Heart left ventricle (tissue), 16 donors: ENCODE measurements at regions of chr7 and their contacts with region 1.

Region 1: GRCh38 chr7:92833024-92833765 is 3.2 kb downstream of the CDK6 start:
- DNase-seq: peak; percentile 85 to 93 (median 89)
- ATAC-seq: peak; percentile 59 to 85 (median 79)
- H3K4me3 ChIP-seq: peak overlapping the region; percentile 65 to 91 (median 85)
- H3K27ac ChIP-seq: peak overlapping the region; percentile 87 to 97 (median 92)
- H3K4me1 ChIP-seq: peaks cover 1 to 54% (median 20%) of the 10 kb centered on the region in 12 donors
- H3K27me3 ChIP-seq: no peaks in the 10 kb centered on the region
- CTCF ChIP-seq: peak; percentile 72 to 93 (median 83)
- POLR2A ChIP-seq: peak in 1 of 2 donors; percentile 25

Region 2: GRCh38 chr7:92621026-92621540 is 212.1 kb before region 1 on chr7:
- intact Hi-C with region 1: loop called (anchors 1 to 5 kb)
- DNase-seq: peak in 4 of 5 donors; percentile 59 to 77 (median 70)
- ATAC-seq: peak; percentile 68 to 92 (median 86)
- H3K4me3 ChIP-seq: no peak overlapping the region
- H3K27ac ChIP-seq: peak overlapping the region in 8 of 12 donors; percentile 1 to 70 (median 18)
- H3K4me1 ChIP-seq: peaks cover 0 to 31% (median 8%) of the 10 kb centered on the region in 12 donors
- H3K27me3 ChIP-seq: no peaks in the 10 kb centered on the region
- CTCF ChIP-seq: peak; percentile 64 to 85 (median 80)
- POLR2A ChIP-seq: no peak

Region 3: DNA sequence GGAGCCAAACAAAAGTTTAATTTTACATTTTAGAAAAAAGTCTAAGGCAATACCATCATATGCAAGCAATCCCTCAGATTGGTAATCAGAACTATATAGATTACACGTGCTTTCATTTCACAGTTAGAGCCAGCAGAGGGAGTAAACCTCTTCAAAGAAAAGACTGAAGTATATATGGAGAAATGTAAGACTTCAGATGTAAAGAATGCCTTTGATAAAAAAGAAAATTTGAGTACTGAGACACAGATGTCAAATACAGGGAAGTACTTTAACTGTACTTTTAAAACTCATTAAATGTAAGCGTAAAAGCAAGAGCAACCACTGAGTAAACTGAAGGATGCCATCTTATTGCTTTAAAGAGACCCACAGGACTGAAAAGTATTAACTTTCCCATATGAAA is 141.6 kb before region 1 on chr7:
- intact Hi-C with region 1: loop called in 9 of 10 experiments (anchors 1 to 5 kb)
- DNase-seq: no peak
- ATAC-seq: no peak
- H3K4me3 ChIP-seq: no peak overlapping the region
- H3K27ac ChIP-seq: no peak overlapping the region
- H3K4me1 ChIP-seq: peaks cover 0 to 30% (median 13%) of the 10 kb centered on the region in 12 donors
- H3K27me3 ChIP-seq: no peaks in the 10 kb centered on the region
- CTCF ChIP-seq: peak; percentile 24 to 65 (median 49)
- POLR2A ChIP-seq: no peak

Region 4: GRCh38 chr7:92781117-92781720 is 52.0 kb before region 1 on chr7:
- intact Hi-C with region 1: loop called in 4 of 10 experiments (anchors 5 to 10 kb)
- DNase-seq: peak; percentile 41 to 58 (median 49)
- ATAC-seq: peak; percentile 73 to 94 (median 80)
- H3K4me3 ChIP-seq: no peak overlapping the region
- H3K27ac ChIP-seq: peak overlapping the region in 11 of 12 donors; percentile 1 to 57 (median 35)
- H3K4me1 ChIP-seq: peaks cover 0 to 63% (median 43%) of the 10 kb centered on the region in 12 donors
- H3K27me3 ChIP-seq: no peaks in the 10 kb centered on the region
- CTCF ChIP-seq: no peak
- POLR2A ChIP-seq: no peak

Region 5: GRCh38 chr7:92904292-92905131 is 71.3 kb after region 1 on chr7:
- intact Hi-C with region 1: no loop called
- DNase-seq: no peak
- ATAC-seq: no peak
- H3K4me3 ChIP-seq: no peak overlapping the region
- H3K27ac ChIP-seq: no peak overlapping the region
- H3K4me1 ChIP-seq: peaks cover 0 to 8% (median 0%) of the 10 kb centered on the region in 12 donors
- H3K27me3 ChIP-seq: no peaks in the 10 kb centered on the region
- CTCF ChIP-seq: no peak
- POLR2A ChIP-seq: no peak

Region 6: GRCh38 chr7:93115796-93116195 is 282.6 kb after region 1 on chr7:
- intact Hi-C with region 1: no loop called
- DNase-seq: no peak
- ATAC-seq: peak in 1 of 4 donors; percentile 43
- H3K4me3 ChIP-seq: peak overlapping the region in 2 of 12 donors; percentile 63 to 73
- H3K27ac ChIP-seq: no peak overlapping the region
- H3K4me1 ChIP-seq: peaks cover 0 to 27% (median 5%) of the 10 kb centered on the region in 12 donors
- H3K27me3 ChIP-seq: no peaks in the 10 kb centered on the region
- CTCF ChIP-seq: no peak
- POLR2A ChIP-seq: no peak

Region 7: GRCh38 chr7:93374345-93374940 is 541.2 kb after region 1 on chr7:
- intact Hi-C with region 1: no loop called
- DNase-seq: no peak
- ATAC-seq: no peak
- H3K4me3 ChIP-seq: no peak overlapping the region
- H3K27ac ChIP-seq: no peak overlapping the region
- H3K4me1 ChIP-seq: no peaks in the 10 kb centered on the region
- H3K27me3 ChIP-seq: no peaks in the 10 kb centered on the region
- CTCF ChIP-seq: peak; percentile 31 to 66 (median 50)
- POLR2A ChIP-seq: no peak